ENCODE measurements at regions of chr12 and their contacts with region 1.

Region 1: GRCh38 chr12:6851921-6852650 is at the start of gene USP5:
- DNase-seq: peak; percentile 99
- ATAC-seq: peak; percentile 80
- H3K4me3 Mint-ChIP-seq: peak within 1 kb of the TSS; percentile 93
- H3K27ac Mint-ChIP-seq: peak within 1 kb of the TSS; percentile 99
- H3K4me1 Mint-ChIP-seq: peaks cover 21% of the 10 kb centered on the region
- H3K27me3 Mint-ChIP-seq: no peaks in the 10 kb centered on the region
- total RNA-seq, gene USP5: 128 to 132 TPM

Region 2: GRCh38 chr12:6554168-6555017 is 297.7 kb before region 1 on chr12:
- CTCF ChIA-PET with region 1: interaction called, 4 read pairs
- POLR2A ChIA-PET with region 1: interaction called, 3 read pairs
- intact Hi-C with region 1: loop called in 1 of 2 experiments (anchors 5 kb)
- DNase-seq: peak; percentile 88
- ATAC-seq: peak; percentile 68
- H3K4me3 Mint-ChIP-seq: peak overlapping the region; percentile 91
- H3K27ac Mint-ChIP-seq: peak overlapping the region; percentile 76
- H3K4me1 Mint-ChIP-seq: peaks cover 54% of the 10 kb centered on the region
- H3K27me3 Mint-ChIP-seq: no peaks in the 10 kb centered on the region

Region 3: DNA sequence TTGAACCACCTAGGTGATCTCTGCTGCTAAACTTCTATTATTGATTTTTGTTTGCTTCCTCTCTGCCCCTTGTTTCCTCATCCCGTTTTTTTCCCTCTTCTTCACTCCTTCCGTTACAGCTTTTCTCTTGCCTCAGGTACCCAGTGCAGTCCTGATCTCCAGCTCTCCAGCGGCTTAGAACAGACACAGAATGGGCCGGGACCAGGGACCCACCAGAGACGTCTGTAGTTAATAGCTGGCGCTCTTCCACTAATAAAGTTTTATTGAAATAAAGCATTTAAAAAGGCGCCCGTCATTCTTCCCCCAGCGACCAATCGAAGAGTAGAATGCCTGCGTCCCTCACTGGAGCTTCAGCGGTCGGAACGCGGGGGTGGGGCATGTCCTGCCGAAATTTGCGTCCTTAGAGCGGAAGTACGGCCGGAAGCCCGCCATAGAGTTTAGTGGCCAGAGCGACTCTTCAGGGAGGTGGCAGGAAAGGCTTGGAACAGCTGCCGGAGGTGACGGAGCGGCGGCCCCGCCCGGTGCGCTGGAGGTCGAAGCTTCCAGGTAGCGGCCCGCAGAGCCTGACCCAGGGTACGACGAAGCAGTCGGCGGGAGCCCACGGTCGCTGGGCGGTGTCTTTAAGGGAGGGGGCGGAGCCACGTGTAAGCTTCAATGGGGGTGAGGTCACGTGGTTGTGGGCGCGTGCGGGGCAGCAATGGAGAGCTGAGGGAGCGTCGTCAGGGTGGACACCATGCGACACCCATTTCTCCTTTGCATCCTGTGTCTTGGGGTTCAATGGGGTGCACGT is 128.3 kb before region 1 on chr12 and contains the start of gene COPS7A:
- CTCF ChIA-PET with region 1: interaction called, 9 read pairs
- POLR2A ChIA-PET with region 1: interaction called, 14 read pairs
- intact Hi-C with region 1: loop called (anchors 1 kb)
- DNase-seq: peak; percentile 98
- ATAC-seq: peak; percentile 96
- H3K4me3 Mint-ChIP-seq: peak within 1 kb of the TSS; percentile 80
- H3K27ac Mint-ChIP-seq: peak within 1 kb of the TSS; percentile 97
- H3K4me1 Mint-ChIP-seq: peaks cover 18% of the 10 kb centered on the region
- H3K27me3 Mint-ChIP-seq: no peaks in the 10 kb centered on the region
- total RNA-seq, gene COPS7A: 38.3 to 41.6 TPM

Region 4: DNA sequence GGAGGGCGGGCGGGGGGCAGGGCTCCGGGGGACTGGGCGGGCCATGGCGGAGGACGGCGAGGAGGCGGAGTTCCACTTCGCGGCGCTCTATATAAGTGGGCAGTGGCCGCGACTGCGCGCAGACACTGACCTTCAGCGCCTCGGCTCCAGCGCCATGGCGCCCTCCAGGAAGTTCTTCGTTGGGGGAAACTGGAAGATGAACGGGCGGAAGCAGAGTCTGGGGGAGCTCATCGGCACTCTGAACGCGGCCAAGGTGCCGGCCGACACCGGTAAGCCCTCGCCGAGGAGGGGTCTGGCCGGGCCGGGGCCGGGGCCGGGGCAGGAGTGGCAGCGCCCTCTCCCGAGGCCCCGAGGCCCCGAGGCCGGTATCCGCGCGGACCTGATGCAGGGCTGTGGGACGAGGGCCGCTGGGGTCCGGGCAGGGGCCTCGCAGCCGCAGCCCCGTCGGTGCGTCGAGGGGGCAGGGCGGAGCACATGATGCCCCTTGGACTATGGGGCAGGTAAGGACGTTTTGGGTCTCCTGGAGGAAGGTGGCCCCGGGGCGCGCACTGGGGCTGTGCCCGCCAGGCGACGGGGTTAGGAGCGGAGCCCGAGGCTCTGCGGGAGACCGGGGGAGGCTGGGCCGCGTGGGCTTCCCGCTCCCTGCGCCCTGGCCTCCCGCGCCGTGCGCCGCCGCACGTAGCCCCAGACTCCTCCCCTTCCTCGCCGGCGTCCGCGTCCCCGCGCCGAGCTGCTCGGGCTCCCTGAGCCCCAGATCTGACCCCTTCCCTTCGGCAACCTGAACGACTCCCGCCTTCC is 15.5 kb after region 1 on chr12 and contains the start of gene TPI1:
- CTCF ChIA-PET with region 1: interaction called, 51 read pairs
- POLR2A ChIA-PET with region 1: interaction called, 65 read pairs
- intact Hi-C with region 1: loop called (anchors 1 kb)
- DNase-seq: peak; percentile 91
- ATAC-seq: peak; percentile 68
- H3K4me3 Mint-ChIP-seq: peak within 1 kb of the TSS; percentile 93
- H3K27ac Mint-ChIP-seq: peak within 1 kb of the TSS; percentile 95
- H3K4me1 Mint-ChIP-seq: peaks cover 47% of the 10 kb centered on the region
- H3K27me3 Mint-ChIP-seq: no peaks in the 10 kb centered on the region
- total RNA-seq, gene TPI1: 1,824 to 2,753 TPM

Region 5: GRCh38 chr12:6904280-6905278 is 52.5 kb after region 1 on chr12 and contains the start of gene LRRC23:
- CTCF ChIA-PET with region 1: interaction called, 3 read pairs
- POLR2A ChIA-PET with region 1: no interaction called
- intact Hi-C with region 1: loop called (anchors 1 kb)
- DNase-seq: peak; percentile 99
- ATAC-seq: peak; percentile 97
- H3K4me3 Mint-ChIP-seq: no peak within 1 kb of the TSS
- H3K27ac Mint-ChIP-seq: no peak within 1 kb of the TSS
- H3K4me1 Mint-ChIP-seq: peaks cover 14% of the 10 kb centered on the region
- H3K27me3 Mint-ChIP-seq: no peaks in the 10 kb centered on the region
- total RNA-seq, gene LRRC23: 6.4 to 7.0 TPM

Region 6: GRCh38 chr12:7018350-7019042 is 166.4 kb after region 1 on chr12 and contains the start of gene LPCAT3:
- CTCF ChIA-PET with region 1: no interaction called
- POLR2A ChIA-PET with region 1: no interaction called
- intact Hi-C with region 1: loop called in 1 of 2 experiments (anchors 1 kb)
- DNase-seq: peak; percentile 98
- ATAC-seq: peak; percentile 98
- H3K4me3 Mint-ChIP-seq: peak within 1 kb of the TSS; percentile 83
- H3K27ac Mint-ChIP-seq: peak within 1 kb of the TSS; percentile 80
- H3K4me1 Mint-ChIP-seq: peaks cover 29% of the 10 kb centered on the region
- H3K27me3 Mint-ChIP-seq: no peaks in the 10 kb centered on the region
- total RNA-seq, gene LPCAT3: 20.8 to 28.0 TPM

Measured in activated CD4-positive, alpha-beta T cell treated with anti-CD3 and anti-CD28 coated beads for 36 hours (primary cell).